AG04449 (cell line): ENCODE measurements at regions of chrX and their contacts with region 1.

Region 1: GRCh38 chrX:21985332-21985777 is 44.8 kb downstream of the SMS start:
- DNase-seq: no peak
- H3K4me3 ChIP-seq: no peak overlapping the region
- CTCF ChIP-seq: peak; percentile 62

Region 2: GRCh38 chrX:21839334-21840192 is 145.8 kb before region 1 on chrX and contains the start of gene MBTPS2:
- CTCF ChIA-PET with region 1: interaction called, 13 read pairs
- POLR2A ChIA-PET with region 1: no interaction called
- DNase-seq: peak; percentile 60
- H3K4me3 ChIP-seq: peak within 1 kb of the TSS; percentile 74
- CTCF ChIP-seq: peak; percentile 21

Region 3: GRCh38 chrX:21996185-21996584 is 10.8 kb after region 1 on chrX:
- CTCF ChIA-PET with region 1: interaction called, 12 read pairs
- POLR2A ChIA-PET with region 1: no interaction called
- DNase-seq: no peak
- H3K4me3 ChIP-seq: no peak overlapping the region
- CTCF ChIP-seq: no peak

Region 4: DNA sequence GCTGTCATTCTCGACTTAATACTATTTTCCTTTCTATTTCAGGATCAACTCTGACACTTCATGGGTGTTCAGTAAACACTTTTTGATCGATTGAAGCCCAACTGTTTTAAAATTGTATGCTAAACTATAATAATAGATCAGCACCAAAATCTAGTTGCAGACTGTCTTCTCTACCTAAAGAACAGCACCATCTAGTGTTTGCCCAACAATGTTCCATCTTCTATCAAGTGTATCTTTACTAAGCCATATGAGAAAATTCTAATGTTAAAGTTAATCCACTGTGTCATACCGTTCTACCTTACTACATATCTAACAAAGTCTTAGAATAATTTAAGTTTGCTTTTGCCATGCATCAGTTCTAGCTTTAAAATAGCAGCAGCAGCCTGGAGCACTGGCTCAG is 1568.9 kb after region 1 on chrX:
- CTCF ChIA-PET with region 1: interaction called, 39 read pairs
- POLR2A ChIA-PET with region 1: no interaction called
- DNase-seq: peak; percentile 5
- H3K4me3 ChIP-seq: no peak overlapping the region
- CTCF ChIP-seq: peak; percentile 41

Region 5: DNA sequence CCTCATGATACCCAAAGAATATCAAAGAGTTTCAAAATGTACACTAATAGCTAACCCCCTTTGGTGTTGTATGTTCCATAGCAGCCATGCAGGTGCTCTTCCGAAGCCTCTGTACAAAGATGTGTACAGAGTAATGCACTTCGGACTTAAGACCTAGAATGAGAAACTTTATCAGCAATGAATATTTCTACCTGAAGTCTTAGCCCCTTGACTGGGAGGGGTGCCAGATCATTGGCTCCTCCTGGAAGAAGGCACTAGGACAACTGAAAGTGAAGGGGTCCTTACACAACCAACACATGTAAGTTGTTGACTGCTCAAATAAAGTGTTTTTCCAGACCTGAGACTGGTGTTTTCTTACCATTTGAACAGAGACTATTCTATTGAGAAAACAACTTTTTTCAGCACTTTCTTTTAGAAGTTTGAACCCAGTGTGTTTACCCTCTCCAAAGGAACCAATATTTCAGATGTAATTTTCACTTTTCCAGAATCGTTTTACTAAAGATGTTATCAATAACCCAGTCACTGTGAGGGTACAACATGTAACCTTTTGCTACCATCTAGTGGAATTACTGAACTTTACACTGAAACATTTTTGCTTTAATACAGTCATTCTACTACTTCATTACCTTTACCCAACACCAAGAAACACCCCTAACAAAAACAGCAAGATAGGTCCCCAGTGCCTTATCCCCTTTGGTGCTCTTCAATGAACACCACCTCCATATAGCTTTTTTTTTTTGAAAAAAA is 1648.7 kb after region 1 on chrX:
- CTCF ChIA-PET with region 1: interaction called, 14 read pairs
- POLR2A ChIA-PET with region 1: no interaction called
- DNase-seq: no peak
- H3K4me3 ChIP-seq: no peak overlapping the region
- CTCF ChIP-seq: peak; percentile 8